IMR-90 (cell line): ENCODE measurements at regions of chr12 and their contacts with region 1.

Region 1: GRCh38 chr12:93378373-93379325 is 924 bp downstream of the NUDT4 start:
- DNase-seq: peak; percentile 72
- ATAC-seq: peak; percentile 9
- H3K4me3 ChIP-seq: peak overlapping the region; percentile 98
- H3K27ac ChIP-seq: peak overlapping the region; percentile 59
- H3K4me1 ChIP-seq: peaks cover 12% of the 10 kb centered on the region
- H3K27me3 ChIP-seq: no peaks in the 10 kb centered on the region
- CTCF ChIP-seq: no peak
- POLR2A ChIP-seq: peak; percentile 60; the same call in 1 of the 2 replicates
- RAD21 ChIP-seq: 0 out of 2 replicates have a peak, but pooled peaks have one; percentile 4

Region 2: DNA sequence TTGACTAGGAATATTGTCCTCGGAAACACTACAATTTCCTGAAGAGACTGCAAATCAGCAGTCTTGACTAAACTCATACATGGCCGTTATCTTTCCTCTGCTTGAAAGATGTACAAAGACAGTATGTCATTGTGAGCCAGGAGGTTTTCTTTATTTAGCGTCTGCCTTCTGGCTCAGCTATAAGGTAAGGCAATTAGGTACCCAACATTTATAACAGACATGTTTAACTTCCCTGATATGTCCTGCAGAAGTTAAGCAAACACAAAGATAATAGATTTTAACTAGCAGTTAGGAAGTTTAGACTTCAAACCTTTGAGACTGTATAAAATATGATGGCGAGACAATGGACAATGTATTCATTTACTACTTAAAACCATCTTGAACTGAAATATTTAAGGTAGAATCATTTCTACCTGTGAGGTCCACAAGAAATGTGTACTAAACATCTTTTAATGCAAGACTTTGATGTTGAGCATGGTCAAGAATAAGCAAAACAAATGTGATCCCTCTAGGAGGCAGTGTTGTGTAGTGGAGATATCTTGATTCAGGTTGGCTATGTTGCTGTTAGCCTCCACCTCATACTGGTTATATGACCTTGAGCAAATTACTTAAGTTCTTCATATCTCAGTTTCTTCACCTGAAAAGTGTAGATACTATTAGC is 353.4 kb before region 1 on chr12:
- CTCF ChIA-PET with region 1: no interaction called
- POLR2A ChIA-PET with region 1: no interaction called
- dilution Hi-C with region 1: no loop called
- in situ Hi-C with region 1: no loop called
- intact Hi-C with region 1: loop called (anchors 1 kb)
- DNase-seq: peak; percentile 75
- ATAC-seq: peak; percentile 91
- H3K4me3 ChIP-seq: no peak overlapping the region
- H3K27ac ChIP-seq: no peak overlapping the region
- H3K4me1 ChIP-seq: no peaks in the 10 kb centered on the region
- H3K27me3 ChIP-seq: no peaks in the 10 kb centered on the region
- CTCF ChIP-seq: peak; percentile 72
- POLR2A ChIP-seq: no peak
- RAD21 ChIP-seq: peak; percentile 87

Region 3: GRCh38 chr12:93127582-93128331 is 250.9 kb before region 1 on chr12:
- CTCF ChIA-PET with region 1: interaction called, 5 read pairs
- POLR2A ChIA-PET with region 1: no interaction called
- dilution Hi-C with region 1: no loop called
- in situ Hi-C with region 1: no loop called
- intact Hi-C with region 1: loop called (anchors 1 kb)
- DNase-seq: peak; percentile 92
- ATAC-seq: peak; percentile 93
- H3K4me3 ChIP-seq: no peak overlapping the region
- H3K27ac ChIP-seq: no peak overlapping the region
- H3K4me1 ChIP-seq: peaks cover 8% of the 10 kb centered on the region
- H3K27me3 ChIP-seq: no peaks in the 10 kb centered on the region
- CTCF ChIP-seq: peak; percentile 47
- POLR2A ChIP-seq: no peak
- RAD21 ChIP-seq: peak; percentile 40; the same call in 1 of the 2 replicates

Region 4: GRCh38 chr12:93176165-93176564 is 202.5 kb before region 1 on chr12:
- CTCF ChIA-PET with region 1: no interaction called
- POLR2A ChIA-PET with region 1: no interaction called
- dilution Hi-C with region 1: no loop called
- in situ Hi-C with region 1: no loop called
- intact Hi-C with region 1: loop called (anchors 5 kb)
- DNase-seq: peak; percentile 76
- ATAC-seq: peak; percentile 42
- H3K4me3 ChIP-seq: no peak overlapping the region
- H3K27ac ChIP-seq: peak overlapping the region; percentile 54; the same call in 1 of the 2 replicates
- H3K4me1 ChIP-seq: peaks cover 27% of the 10 kb centered on the region
- H3K27me3 ChIP-seq: no peaks in the 10 kb centered on the region
- CTCF ChIP-seq: no peak
- POLR2A ChIP-seq: no peak
- RAD21 ChIP-seq: no peak

Region 5: GRCh38 chr12:93243689-93244513 is 134.7 kb before region 1 on chr12:
- CTCF ChIA-PET with region 1: interaction called, 3 read pairs
- POLR2A ChIA-PET with region 1: no interaction called
- dilution Hi-C with region 1: no loop called
- in situ Hi-C with region 1: no loop called
- intact Hi-C with region 1: loop called (anchors 5 kb)
- DNase-seq: peak; percentile 78
- ATAC-seq: peak; percentile 69
- H3K4me3 ChIP-seq: no peak overlapping the region
- H3K27ac ChIP-seq: peak overlapping the region; percentile 18; the same call in 1 of the 2 replicates
- H3K4me1 ChIP-seq: peaks cover 7% of the 10 kb centered on the region
- H3K27me3 ChIP-seq: no peaks in the 10 kb centered on the region
- CTCF ChIP-seq: no peak
- POLR2A ChIP-seq: no peak
- RAD21 ChIP-seq: no peak

Region 6: DNA sequence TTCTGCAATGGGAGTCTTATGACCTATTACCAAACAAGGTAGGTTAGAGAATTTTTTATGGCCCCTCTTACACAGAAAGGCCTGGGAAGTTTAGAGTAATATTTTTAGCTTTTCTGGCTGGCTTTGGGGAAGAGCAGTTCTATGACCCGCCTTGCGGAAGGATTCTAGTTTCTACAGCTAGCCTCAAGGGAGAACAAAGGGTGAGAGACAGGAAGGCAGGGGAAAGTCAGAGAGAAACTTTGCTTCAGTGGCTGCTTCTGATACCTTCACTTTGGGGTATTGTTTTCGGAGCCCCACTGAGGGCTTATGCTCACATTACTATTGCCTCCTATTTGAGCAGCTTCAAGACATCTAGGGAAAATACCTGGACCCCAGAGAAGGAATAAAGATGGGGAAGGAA is 81.6 kb before region 1 on chr12:
- CTCF ChIA-PET with region 1: no interaction called
- POLR2A ChIA-PET with region 1: no interaction called
- dilution Hi-C with region 1: no loop called
- in situ Hi-C with region 1: no loop called
- intact Hi-C with region 1: no loop called
- DNase-seq: no peak
- ATAC-seq: no peak
- H3K4me3 ChIP-seq: no peak overlapping the region
- H3K27ac ChIP-seq: no peak overlapping the region
- H3K4me1 ChIP-seq: no peaks in the 10 kb centered on the region
- H3K27me3 ChIP-seq: no peaks in the 10 kb centered on the region
- CTCF ChIP-seq: no peak
- POLR2A ChIP-seq: no peak
- RAD21 ChIP-seq: no peak

Region 7: GRCh38 chr12:93347054-93347776 is 31.4 kb before region 1 on chr12:
- CTCF ChIA-PET with region 1: no interaction called
- POLR2A ChIA-PET with region 1: no interaction called
- dilution Hi-C with region 1: no loop called
- in situ Hi-C with region 1: no loop called
- intact Hi-C with region 1: no loop called
- DNase-seq: no peak
- ATAC-seq: no peak
- H3K4me3 ChIP-seq: no peak overlapping the region
- H3K27ac ChIP-seq: no peak overlapping the region
- H3K4me1 ChIP-seq: no peaks in the 10 kb centered on the region
- H3K27me3 ChIP-seq: no peaks in the 10 kb centered on the region
- CTCF ChIP-seq: no peak
- POLR2A ChIP-seq: no peak
- RAD21 ChIP-seq: no peak

Region 8: DNA sequence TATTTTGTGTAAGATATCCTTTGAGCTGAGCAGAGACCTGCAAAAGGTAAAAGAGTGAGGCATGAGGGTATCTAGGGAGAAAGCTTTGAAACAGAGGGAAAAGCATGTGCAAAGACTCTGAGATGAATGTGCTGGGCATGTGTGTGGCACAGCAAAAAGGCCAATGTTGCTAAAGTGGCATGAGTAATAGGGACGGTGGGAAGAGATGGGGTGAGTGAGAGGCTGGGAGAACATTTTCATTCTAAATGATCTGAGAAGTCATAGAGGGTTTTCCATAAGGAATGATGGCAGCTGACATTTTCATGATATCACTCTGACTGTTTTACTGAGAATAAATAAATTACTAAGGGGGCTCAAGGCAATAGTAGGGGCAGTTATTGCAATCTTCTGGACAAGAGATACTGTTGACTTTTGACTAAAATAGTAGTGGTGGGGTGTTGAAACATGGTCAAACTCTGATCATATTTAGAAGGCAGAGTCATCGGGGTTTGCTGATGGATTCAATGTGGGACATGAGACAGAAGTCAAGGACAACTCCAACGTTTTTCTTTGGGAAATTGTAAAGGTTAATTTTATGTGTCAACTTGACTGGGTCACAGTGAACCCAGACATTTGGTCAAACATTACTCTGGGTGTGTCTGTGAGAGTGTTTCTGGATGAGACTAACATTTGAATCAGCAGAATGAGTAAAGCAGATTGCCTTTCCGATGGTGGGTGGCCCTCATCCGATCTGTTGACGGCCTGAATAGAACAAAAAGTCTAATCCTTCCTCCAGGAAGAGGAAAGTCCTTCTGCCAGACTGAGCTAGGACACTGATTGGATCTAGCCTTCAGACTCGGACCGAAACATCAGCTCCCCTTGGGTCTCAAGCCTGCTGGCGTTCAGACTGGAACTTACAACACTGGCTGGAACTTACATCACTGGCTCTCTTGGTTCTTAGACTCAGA is 575.8 kb after region 1 on chr12:
- CTCF ChIA-PET with region 1: no interaction called
- POLR2A ChIA-PET with region 1: no interaction called
- dilution Hi-C with region 1: no loop called
- in situ Hi-C with region 1: no loop called
- intact Hi-C with region 1: no loop called
- DNase-seq: peak; percentile 19
- ATAC-seq: no peak; the same call in 1 of the 2 replicates
- H3K4me3 ChIP-seq: no peak overlapping the region
- H3K27ac ChIP-seq: peak overlapping the region; percentile 18; the same call in 1 of the 2 replicates
- H3K4me1 ChIP-seq: peaks cover 6% of the 10 kb centered on the region; the same call in 1 of the 2 replicates
- H3K27me3 ChIP-seq: no peaks in the 10 kb centered on the region
- CTCF ChIP-seq: no peak
- POLR2A ChIP-seq: no peak
- RAD21 ChIP-seq: no peak